MCF 10A (cell line): ENCODE measurements at regions of chr6 and their contacts with region 1.

Region 1: DNA sequence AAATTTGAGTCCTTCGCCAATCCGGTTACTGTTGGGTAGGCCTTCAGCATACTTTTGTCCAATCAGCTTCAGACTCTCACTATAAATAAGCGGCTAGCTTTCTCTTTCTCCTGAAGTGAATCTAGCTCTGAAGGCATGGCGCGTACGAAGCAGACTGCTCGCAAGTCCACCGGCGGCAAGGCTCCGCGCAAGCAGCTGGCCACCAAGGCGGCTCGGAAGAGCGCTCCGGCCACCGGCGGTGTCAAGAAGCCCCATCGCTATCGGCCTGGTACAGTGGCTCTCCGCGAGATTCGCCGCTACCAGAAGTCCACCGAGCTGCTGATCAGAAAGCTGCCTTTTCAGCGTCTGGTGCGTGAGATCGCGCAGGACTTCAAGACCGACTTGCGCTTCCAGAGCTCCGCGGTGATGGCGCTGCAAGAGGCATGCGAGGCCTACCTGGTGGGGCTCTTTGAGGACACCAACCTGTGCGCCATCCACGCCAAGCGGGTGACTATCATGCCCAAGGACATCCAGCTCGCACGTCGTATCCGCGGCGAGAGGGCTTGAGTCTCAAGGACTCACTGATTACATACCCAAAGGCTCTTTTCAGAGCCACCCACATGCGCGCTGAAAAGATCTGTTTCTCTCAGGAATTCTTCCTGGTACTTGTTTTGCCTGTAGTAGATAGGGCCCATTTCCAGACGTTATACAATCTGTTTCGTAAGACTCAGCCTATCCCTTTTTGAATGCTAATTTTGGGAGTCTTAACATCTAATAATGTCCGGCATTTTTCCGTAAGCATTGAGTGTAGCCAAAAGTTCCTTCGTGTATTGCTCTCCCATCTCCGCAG is 102.0 kb downstream of the OR2B2 start:
- DNase-seq: peak; percentile 96
- H3K4me3 Mint-ChIP-seq: peak overlapping the region; percentile 86
- H3K27ac Mint-ChIP-seq: peak overlapping the region; percentile 94
- H3K4me1 Mint-ChIP-seq: peaks cover 20% of the 10 kb centered on the region
- H3K27me3 Mint-ChIP-seq: no peaks in the 10 kb centered on the region
- CTCF ChIP-seq: no peak

Region 2: DNA sequence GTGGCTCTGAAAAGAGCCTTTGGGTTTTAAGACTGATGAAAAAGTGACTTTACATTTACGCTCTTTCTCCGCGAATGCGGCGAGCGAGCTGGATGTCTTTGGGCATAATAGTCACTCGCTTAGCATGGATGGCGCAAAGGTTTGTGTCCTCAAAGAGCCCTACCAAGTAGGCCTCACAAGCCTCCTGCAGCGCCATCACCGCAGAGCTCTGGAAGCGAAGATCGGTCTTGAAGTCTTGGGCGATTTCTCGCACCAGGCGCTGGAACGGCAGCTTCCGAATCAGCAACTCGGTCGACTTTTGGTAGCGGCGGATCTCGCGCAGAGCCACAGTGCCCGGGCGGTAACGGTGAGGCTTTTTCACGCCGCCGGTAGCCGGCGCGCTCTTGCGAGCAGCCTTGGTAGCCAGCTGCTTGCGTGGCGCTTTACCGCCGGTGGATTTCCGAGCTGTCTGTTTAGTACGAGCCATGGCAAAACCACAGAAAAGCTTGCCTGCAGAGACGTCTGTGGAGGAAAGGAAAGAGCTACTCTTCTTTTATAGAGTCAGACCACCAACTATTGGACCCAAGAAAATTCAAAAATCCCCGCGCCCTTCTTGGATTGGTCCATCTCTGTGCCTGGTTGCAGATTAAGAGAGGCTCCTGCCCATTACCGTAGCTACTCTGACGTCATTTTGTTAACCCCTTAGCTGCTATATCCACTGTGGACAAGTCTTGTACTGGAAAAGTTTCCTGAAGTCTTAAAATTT is 1778.4 kb before region 1 on chr6:
- CTCF ChIA-PET with region 1: no interaction called
- POLR2A ChIA-PET with region 1: interaction called, 58 read pairs
- intact Hi-C with region 1: loop called (anchors 10 kb)
- DNase-seq: peak; percentile 99
- H3K4me3 Mint-ChIP-seq: peak overlapping the region; percentile 81
- H3K27ac Mint-ChIP-seq: peak overlapping the region; percentile 97
- H3K4me1 Mint-ChIP-seq: peaks cover 25% of the 10 kb centered on the region
- H3K27me3 Mint-ChIP-seq: no peaks in the 10 kb centered on the region
- CTCF ChIP-seq: peak; percentile 12

Region 3: DNA sequence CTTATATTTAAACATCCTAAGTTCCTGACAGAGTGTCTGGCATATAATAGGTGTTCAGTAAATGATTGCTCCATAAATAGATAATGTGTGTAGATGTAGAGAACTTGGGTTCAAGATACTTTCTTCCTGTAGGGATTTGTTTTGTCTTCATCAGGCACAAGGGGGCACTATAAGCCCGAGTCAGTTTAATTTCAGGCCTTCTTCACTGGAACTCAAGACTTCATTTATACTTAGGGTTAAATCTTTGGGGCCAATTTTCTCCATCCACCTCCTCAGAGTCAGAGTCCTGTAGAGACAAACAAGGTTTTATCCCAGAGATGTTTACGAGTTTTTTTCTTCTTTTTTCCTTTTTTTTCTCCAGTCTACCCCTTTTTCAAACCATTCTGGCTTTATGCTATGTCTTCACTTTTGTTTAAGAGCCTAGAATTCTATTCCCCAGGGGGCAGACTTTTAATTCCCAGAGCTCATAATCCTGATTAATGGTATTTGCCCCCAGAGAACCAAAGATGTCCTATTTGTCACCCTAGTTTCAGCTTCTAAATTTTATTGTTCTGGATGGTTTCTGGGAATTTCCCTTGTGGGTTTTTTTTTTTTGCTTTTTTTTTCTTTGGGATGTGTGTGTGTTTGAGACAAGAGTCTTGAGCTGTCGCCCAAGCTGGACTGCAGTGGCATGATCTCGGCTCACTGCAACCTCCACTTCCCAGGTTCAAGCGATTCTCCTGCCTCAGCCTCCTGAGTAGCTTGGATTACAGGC is 1634.5 kb before region 1 on chr6:
- CTCF ChIA-PET with region 1: interaction called, 3 read pairs
- POLR2A ChIA-PET with region 1: interaction called, 17 read pairs
- intact Hi-C with region 1: no loop called
- DNase-seq: peak; percentile 82
- H3K4me3 Mint-ChIP-seq: peak overlapping the region; percentile 23
- H3K27ac Mint-ChIP-seq: peak overlapping the region; percentile 70
- H3K4me1 Mint-ChIP-seq: peaks cover 28% of the 10 kb centered on the region
- H3K27me3 Mint-ChIP-seq: no peaks in the 10 kb centered on the region
- CTCF ChIP-seq: peak; percentile 70

Region 4: DNA sequence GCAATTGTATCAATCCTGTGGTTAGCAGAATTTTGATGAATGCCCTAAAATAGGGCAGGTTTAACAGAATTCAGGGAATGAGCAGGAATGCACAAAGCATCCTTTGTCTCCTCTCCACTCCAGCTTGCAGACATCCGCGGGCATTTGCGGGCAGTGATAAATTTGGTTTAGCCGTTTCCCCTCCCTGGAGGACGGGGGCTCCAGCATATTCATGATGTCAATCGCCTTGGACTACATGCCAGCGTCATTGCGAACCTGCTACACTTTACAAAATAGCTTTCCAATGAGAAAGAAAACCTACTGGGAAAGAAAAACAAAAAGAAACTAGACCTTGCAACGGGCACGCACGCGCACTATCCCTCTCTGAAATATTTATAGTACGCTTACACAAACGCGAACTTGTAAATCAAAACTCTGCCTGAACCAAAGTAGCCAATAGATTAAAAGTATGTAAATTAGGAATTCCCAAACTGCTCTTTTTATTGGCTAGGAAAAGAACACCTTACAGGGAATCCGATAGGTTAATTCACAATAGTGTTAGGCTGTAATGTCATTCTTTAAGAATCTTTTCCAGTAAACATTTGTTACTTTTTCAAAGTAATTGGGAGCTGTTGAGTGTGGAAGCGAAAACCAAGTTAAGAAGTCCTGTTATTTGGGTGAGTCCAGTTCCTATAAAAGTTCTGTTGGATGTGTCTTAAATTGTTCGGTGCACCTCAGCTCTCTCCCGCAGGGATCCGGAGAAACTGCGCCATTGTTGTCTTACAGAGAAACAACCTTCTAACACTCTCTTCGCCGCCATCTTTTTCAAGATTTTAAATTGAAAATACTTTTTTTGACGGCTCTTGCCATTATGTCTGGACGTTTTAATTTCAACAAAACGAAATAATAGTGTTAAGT is 1586.3 kb before region 1 on chr6:
- CTCF ChIA-PET with region 1: no interaction called
- POLR2A ChIA-PET with region 1: interaction called, 13 read pairs
- intact Hi-C with region 1: no loop called
- DNase-seq: peak; percentile 91
- H3K4me3 Mint-ChIP-seq: no peak overlapping the region
- H3K27ac Mint-ChIP-seq: no peak overlapping the region
- H3K4me1 Mint-ChIP-seq: peaks cover 6% of the 10 kb centered on the region
- H3K27me3 Mint-ChIP-seq: no peaks in the 10 kb centered on the region
- CTCF ChIP-seq: no peak

Region 5: GRCh38 chr6:27782748-27783147 is 27.4 kb before region 1 on chr6:
- CTCF ChIA-PET with region 1: no interaction called
- POLR2A ChIA-PET with region 1: no interaction called
- intact Hi-C with region 1: no loop called
- DNase-seq: no peak
- H3K4me3 Mint-ChIP-seq: no peak overlapping the region
- H3K27ac Mint-ChIP-seq: no peak overlapping the region
- H3K4me1 Mint-ChIP-seq: peaks cover 6% of the 10 kb centered on the region
- H3K27me3 Mint-ChIP-seq: no peaks in the 10 kb centered on the region
- CTCF ChIP-seq: no peak

Region 6: GRCh38 chr6:27795697-27796494 is 14.3 kb before region 1 on chr6:
- CTCF ChIA-PET with region 1: interaction called, 8 read pairs
- POLR2A ChIA-PET with region 1: interaction called, 68 read pairs
- intact Hi-C with region 1: no loop called
- DNase-seq: peak; percentile 91
- H3K4me3 Mint-ChIP-seq: no peak overlapping the region
- H3K27ac Mint-ChIP-seq: no peak overlapping the region
- H3K4me1 Mint-ChIP-seq: peaks cover 5% of the 10 kb centered on the region
- H3K27me3 Mint-ChIP-seq: no peaks in the 10 kb centered on the region
- CTCF ChIP-seq: peak; percentile 79

Region 7: GRCh38 chr6:27864906-27865849 is 55.0 kb after region 1 on chr6:
- CTCF ChIA-PET with region 1: interaction called, 10 read pairs
- POLR2A ChIA-PET with region 1: interaction called, 282 read pairs
- intact Hi-C with region 1: no loop called
- DNase-seq: peak; percentile 96
- H3K4me3 Mint-ChIP-seq: peak overlapping the region; percentile 91
- H3K27ac Mint-ChIP-seq: peak overlapping the region; percentile 97
- H3K4me1 Mint-ChIP-seq: no peaks in the 10 kb centered on the region
- H3K27me3 Mint-ChIP-seq: no peaks in the 10 kb centered on the region
- CTCF ChIP-seq: no peak